PC-3 (cell line): ENCODE measurements at regions of chr7 and their contacts with region 1.

Region 1: GRCh38 chr7:23487670-23488069 is 17.4 kb upstream of the IGF2BP3 start:
- DNase-seq: no peak
- ATAC-seq: no peak; the same call in 1 of the 2 replicates
- H3K4me3 ChIP-seq: no peak overlapping the region
- H3K27ac ChIP-seq: no peak overlapping the region
- H3K4me1 ChIP-seq: no peaks in the 10 kb centered on the region
- H3K27me3 ChIP-seq: no peaks in the 10 kb centered on the region
- CTCF ChIP-seq: no peak

Region 2: DNA sequence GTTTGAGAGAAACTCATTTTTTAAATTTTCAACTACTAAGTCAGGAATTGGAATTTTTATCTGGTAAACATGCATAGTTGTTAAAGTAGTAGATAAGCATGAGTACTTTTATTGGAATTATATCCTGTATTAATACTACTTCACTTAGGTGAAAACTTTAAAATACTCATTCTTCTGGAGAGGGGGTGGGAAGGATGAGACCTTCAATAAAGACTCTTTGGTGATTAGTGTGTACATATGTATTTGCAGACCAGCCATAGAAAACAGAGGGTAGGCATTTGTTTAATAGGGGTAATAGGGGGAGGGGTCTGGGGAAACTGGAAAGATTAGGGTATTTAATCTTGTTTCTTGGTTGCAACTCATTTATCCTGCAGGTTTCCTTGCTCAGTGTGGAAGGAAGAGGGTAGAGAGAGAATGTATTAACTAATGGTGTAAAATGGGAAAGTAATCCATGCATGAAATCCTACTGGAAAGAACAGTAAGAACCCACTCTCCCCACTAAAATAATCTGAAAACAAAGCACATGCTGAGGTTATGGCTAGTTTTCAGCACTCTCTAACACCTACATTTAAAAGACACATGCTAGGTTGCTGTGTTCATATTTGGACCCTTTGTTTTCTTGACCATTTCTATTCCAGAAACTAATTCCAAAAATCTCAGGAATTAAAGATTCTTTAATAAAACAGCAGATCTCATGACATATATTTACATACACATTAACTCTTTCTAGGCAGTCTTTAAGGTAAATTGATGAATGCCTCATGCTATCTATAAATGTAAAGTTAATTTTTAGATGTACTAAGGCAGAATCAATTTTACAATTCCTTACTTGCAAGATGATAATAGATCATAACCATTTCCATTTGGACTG is 11.1 kb before region 1 on chr7:
- CTCF ChIA-PET with region 1: no interaction called
- POLR2A ChIA-PET with region 1: interaction called, 13 read pairs
- intact Hi-C with region 1: no loop called
- DNase-seq: no peak
- ATAC-seq: no peak
- H3K4me3 ChIP-seq: no peak overlapping the region
- H3K27ac ChIP-seq: no peak overlapping the region
- H3K4me1 ChIP-seq: peaks cover 13% of the 10 kb centered on the region
- H3K27me3 ChIP-seq: peaks cover 24% of the 10 kb centered on the region; the same call in 1 of the 2 replicates
- CTCF ChIP-seq: no peak

Region 3: GRCh38 chr7:23759671-23760391 is 272.2 kb after region 1 on chr7:
- CTCF ChIA-PET with region 1: no interaction called
- POLR2A ChIA-PET with region 1: no interaction called
- intact Hi-C with region 1: no loop called
- DNase-seq: peak; percentile 86
- ATAC-seq: peak; percentile 99
- H3K4me3 ChIP-seq: no peak overlapping the region
- H3K27ac ChIP-seq: no peak overlapping the region
- H3K4me1 ChIP-seq: peaks cover 18% of the 10 kb centered on the region
- H3K27me3 ChIP-seq: no peaks in the 10 kb centered on the region
- CTCF ChIP-seq: no peak